MCF 10A (cell line): ENCODE measurements at regions of chr10 and their contacts with region 1.

Region 1: GRCh38 chr10:101569838-101570766 is 18.0 kb downstream of the POLL start:
- DNase-seq: peak; percentile 69
- H3K4me3 Mint-ChIP-seq: peak overlapping the region; percentile 72
- H3K27ac Mint-ChIP-seq: no peak overlapping the region
- H3K4me1 Mint-ChIP-seq: peaks cover 5% of the 10 kb centered on the region
- H3K27me3 Mint-ChIP-seq: peaks cover 16% of the 10 kb centered on the region
- CTCF ChIP-seq: peak; percentile 94

Region 2: GRCh38 chr10:101161494-101162299 is 408.4 kb before region 1 on chr10:
- CTCF ChIA-PET with region 1: interaction called, 3 read pairs
- POLR2A ChIA-PET with region 1: no interaction called
- intact Hi-C with region 1: loop called (anchors 1 kb)
- DNase-seq: peak; percentile 83
- H3K4me3 Mint-ChIP-seq: peak overlapping the region; percentile 63
- H3K27ac Mint-ChIP-seq: no peak overlapping the region
- H3K4me1 Mint-ChIP-seq: peaks cover 19% of the 10 kb centered on the region
- H3K27me3 Mint-ChIP-seq: peaks cover 33% of the 10 kb centered on the region
- CTCF ChIP-seq: peak; percentile 91

Region 3: DNA sequence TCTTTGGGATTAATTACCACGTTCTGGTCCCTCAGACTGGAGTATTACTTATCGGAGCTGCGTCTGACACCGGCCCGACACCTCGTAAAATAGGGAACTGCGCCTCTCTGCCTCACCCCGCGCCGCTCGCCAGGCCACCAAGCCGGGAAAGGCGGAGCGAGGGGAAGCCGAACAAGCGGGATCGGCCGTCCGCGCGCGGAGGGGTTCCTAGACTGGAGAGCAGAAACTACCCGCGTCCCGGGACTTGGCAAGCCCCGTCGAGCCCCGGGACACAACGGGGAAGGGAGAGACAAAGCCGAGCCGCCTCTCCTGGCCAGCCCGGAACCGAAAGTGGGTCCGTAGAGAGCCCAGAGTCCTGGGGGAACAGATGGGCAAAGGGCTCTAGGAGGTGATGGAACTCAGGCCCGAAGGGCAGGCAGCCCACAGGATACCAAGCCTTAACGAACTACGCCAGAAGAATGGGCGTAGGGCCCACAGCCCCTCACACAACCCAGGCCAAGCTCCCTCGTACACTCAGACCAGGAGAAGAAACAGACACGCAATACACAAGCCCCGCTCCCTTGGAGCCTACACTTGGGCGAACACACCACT is 347.3 kb before region 1 on chr10:
- CTCF ChIA-PET with region 1: interaction called, 14 read pairs
- POLR2A ChIA-PET with region 1: interaction called, 4 read pairs
- intact Hi-C with region 1: no loop called
- DNase-seq: no peak
- H3K4me3 Mint-ChIP-seq: no peak overlapping the region
- H3K27ac Mint-ChIP-seq: no peak overlapping the region
- H3K4me1 Mint-ChIP-seq: peaks cover 18% of the 10 kb centered on the region
- H3K27me3 Mint-ChIP-seq: peaks cover 31% of the 10 kb centered on the region
- CTCF ChIP-seq: no peak

Region 4: GRCh38 chr10:101536800-101537199 is 33.3 kb before region 1 on chr10:
- CTCF ChIA-PET with region 1: interaction called, 9 read pairs
- POLR2A ChIA-PET with region 1: no interaction called
- intact Hi-C with region 1: loop called (anchors 2 kb)
- DNase-seq: peak; percentile 51
- H3K4me3 Mint-ChIP-seq: no peak overlapping the region
- H3K27ac Mint-ChIP-seq: no peak overlapping the region
- H3K4me1 Mint-ChIP-seq: no peaks in the 10 kb centered on the region
- H3K27me3 Mint-ChIP-seq: no peaks in the 10 kb centered on the region
- CTCF ChIP-seq: peak; percentile 47

Region 5: GRCh38 chr10:101558202-101558601 is 11.9 kb before region 1 on chr10:
- CTCF ChIA-PET with region 1: interaction called, 12 read pairs
- POLR2A ChIA-PET with region 1: interaction called, 4 read pairs
- intact Hi-C with region 1: no loop called
- DNase-seq: peak; percentile 78
- H3K4me3 Mint-ChIP-seq: no peak overlapping the region
- H3K27ac Mint-ChIP-seq: peak overlapping the region; percentile 93
- H3K4me1 Mint-ChIP-seq: peaks cover 11% of the 10 kb centered on the region
- H3K27me3 Mint-ChIP-seq: no peaks in the 10 kb centered on the region
- CTCF ChIP-seq: no peak

Region 6: GRCh38 chr10:101587725-101588653 is 17.9 kb after region 1 on chr10 and contains the starts of genes DPCD and POLL:
- CTCF ChIA-PET with region 1: interaction called, 13 read pairs
- POLR2A ChIA-PET with region 1: interaction called, 13 read pairs
- intact Hi-C with region 1: no loop called
- DNase-seq: peak; percentile 93
- H3K4me3 Mint-ChIP-seq: peak within 1 kb of the TSS; percentile 93
- H3K27ac Mint-ChIP-seq: peak within 1 kb of the TSS; percentile 87
- H3K4me1 Mint-ChIP-seq: peaks cover 17% of the 10 kb centered on the region
- H3K27me3 Mint-ChIP-seq: no peaks in the 10 kb centered on the region
- CTCF ChIP-seq: no peak
- total RNA-seq, gene DPCD: 24.2 and 25.7 TPM in 2 replicates
- total RNA-seq, gene POLL: 38.5 and 40.7 TPM in 2 replicates

Region 7: DNA sequence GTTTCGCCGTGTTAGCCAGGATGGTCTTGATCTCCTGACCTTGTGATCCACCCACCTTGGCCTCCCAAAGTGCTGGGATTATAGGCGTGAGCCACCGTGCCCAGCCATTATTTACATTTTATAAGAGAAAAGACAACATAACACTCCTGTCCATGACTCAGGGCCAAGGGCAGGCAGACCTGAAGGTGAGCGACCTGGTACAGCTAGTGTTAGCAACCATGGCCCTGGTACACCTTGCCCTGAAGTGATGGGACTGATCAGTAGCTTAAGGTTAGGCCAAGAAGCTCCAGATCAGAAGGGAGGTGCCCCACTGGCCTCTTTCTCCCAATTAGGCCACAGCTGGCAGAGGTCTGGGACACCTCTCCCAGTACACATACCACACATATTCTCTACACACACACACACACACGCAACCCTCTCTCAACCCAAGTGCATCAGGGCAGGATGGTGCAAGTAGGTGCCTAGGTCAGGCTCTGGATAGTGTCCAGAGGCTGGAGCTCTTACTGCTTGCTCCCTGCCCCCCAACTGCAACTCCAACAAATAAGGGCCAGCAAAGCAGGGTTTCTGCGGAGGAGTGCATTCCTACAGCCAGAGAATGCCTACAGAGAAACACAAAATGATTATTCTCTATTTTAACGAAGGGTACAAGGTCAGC is 61.8 kb after region 1 on chr10:
- CTCF ChIA-PET with region 1: no interaction called
- POLR2A ChIA-PET with region 1: no interaction called
- intact Hi-C with region 1: no loop called
- DNase-seq: no peak
- H3K4me3 Mint-ChIP-seq: no peak overlapping the region
- H3K27ac Mint-ChIP-seq: no peak overlapping the region
- H3K4me1 Mint-ChIP-seq: no peaks in the 10 kb centered on the region
- H3K27me3 Mint-ChIP-seq: no peaks in the 10 kb centered on the region
- CTCF ChIP-seq: no peak